Activated CD4-positive, alpha-beta T cell treated with anti-CD3 and anti-CD28 coated beads, Interleukin-2, amount 10 ng/mL, durations not matched to agents 24 days and 14 days (primary cell): ENCODE measurements at regions of chr7 and their contacts with region 1.

Region 1: DNA sequence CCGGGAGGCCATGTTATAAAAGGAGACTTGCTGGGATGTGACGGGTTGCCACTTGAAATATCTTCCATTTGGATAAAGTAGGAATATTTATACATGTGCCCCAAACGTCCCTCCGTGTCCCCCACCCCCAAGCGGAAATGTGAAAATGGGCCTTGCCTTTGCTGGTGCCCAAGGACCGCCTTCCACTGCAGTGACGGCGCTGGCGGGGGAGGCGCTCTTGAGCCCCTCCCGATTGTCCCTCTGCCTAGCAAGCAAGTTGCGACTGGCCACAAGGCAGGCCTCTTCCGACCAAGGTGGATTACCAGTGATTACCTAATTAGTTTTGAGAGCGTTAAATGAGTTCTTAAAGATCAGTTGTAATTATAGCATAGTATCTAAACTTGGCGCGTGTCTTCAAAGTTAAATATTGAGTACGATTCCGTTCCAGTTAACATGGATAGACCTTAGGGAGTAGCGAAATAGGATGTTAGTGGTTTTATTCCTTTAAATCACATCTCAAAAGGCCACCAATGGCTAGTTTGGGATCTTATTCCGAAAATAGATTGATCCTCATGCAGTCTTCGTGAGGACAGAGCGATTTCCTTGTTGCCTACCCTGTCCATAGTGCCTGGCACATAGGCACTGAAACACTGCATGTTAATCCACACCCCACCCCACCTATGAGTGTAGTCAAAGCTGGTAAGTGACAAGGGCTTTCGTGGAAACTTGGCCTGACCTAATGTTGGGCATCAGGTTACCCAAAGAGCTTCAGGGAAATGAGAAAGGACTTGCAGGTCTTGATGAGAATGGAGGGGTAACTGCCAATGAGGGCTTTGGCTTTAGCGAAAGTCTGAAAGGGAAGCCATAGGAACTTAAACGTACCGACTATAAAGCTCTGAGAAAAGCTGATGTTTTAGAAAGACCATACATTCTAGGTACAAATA is 1.1 kb downstream of the PPIA start:
- DNase-seq: peak; percentile 95
- H3K4me3 Mint-ChIP-seq: peak overlapping the region; percentile 98
- H3K27ac Mint-ChIP-seq: peak overlapping the region; percentile 97
- H3K4me1 Mint-ChIP-seq: peaks cover 31% of the 10 kb centered on the region
- H3K27me3 Mint-ChIP-seq: no peaks in the 10 kb centered on the region

Region 2: DNA sequence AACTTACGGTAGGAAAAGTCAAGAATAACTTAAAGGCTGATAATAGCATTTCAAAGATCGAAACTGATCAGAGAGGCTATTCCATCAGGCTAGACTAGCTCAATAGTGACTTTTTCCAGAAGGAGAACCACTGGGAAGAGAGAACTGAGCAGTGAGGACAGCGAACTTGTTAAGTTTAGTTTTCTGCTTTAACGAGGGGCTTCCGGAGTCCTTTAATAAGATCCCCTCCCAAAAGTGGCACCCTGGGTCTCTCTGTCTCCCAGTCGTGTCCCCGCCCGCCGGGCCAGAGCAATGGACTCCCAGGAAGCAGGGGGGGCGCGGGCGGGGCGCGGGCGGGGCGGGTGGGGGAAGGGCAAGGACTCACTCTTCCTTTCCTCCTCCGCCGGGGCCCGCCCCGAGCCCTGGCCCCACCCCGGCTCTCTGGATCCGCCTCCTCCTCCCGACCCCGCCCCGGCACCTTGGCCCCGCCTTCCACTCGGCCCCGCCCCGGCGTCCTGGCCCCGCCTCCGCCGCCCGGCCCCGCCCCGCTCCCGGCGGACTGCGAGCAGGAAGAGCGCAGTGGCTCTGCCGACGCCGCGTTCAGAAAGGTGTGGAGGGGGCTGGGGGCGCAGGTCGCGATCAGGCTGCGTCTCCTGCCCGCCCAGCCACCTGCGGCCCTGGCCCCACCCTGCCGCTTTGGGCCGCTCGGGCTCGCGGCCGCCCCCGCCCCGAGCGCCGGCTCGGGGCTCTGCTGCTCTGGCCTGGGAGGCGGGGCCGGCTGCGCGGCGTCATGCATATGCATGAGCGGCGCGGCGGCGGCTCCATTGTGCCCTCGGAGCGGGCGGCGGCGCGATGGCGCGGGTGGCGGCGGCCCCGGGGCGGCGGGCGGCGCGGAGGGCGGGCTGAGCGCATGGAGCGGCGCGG is 49.3 kb before region 1 on chr7 and contains the start of gene ZMIZ2:
- intact Hi-C with region 1: loop called (anchors 1 kb)
- DNase-seq: peak; percentile 97
- H3K4me3 Mint-ChIP-seq: peak within 1 kb of the TSS; percentile 93
- H3K27ac Mint-ChIP-seq: peak within 1 kb of the TSS; percentile 89
- H3K4me1 Mint-ChIP-seq: peaks cover 33% of the 10 kb centered on the region
- H3K27me3 Mint-ChIP-seq: no peaks in the 10 kb centered on the region
- total RNA-seq, gene ZMIZ2: 130 and 133 TPM in 2 replicates

Region 3: GRCh38 chr7:44761207-44762161 is 36.1 kb before region 1 on chr7:
- intact Hi-C with region 1: no loop called
- DNase-seq: no peak
- H3K4me3 Mint-ChIP-seq: no peak overlapping the region
- H3K27ac Mint-ChIP-seq: no peak overlapping the region
- H3K4me1 Mint-ChIP-seq: no peaks in the 10 kb centered on the region
- H3K27me3 Mint-ChIP-seq: no peaks in the 10 kb centered on the region

Region 4: GRCh38 chr7:44921607-44922359 is 124.2 kb after region 1 on chr7:
- intact Hi-C with region 1: loop called (anchors 2 kb)
- DNase-seq: peak; percentile 98
- H3K4me3 Mint-ChIP-seq: no peak overlapping the region
- H3K27ac Mint-ChIP-seq: peak overlapping the region; percentile 81
- H3K4me1 Mint-ChIP-seq: peaks cover 12% of the 10 kb centered on the region
- H3K27me3 Mint-ChIP-seq: peaks cover under 1% of the 10 kb centered on the region

Region 5: GRCh38 chr7:44980393-44981034 is 182.9 kb after region 1 on chr7:
- intact Hi-C with region 1: loop called (anchors 2 kb)
- DNase-seq: peak; percentile 89
- H3K4me3 Mint-ChIP-seq: peak overlapping the region; percentile 93
- H3K27ac Mint-ChIP-seq: peak overlapping the region; percentile 90
- H3K4me1 Mint-ChIP-seq: peaks cover 63% of the 10 kb centered on the region
- H3K27me3 Mint-ChIP-seq: no peaks in the 10 kb centered on the region